Activated CD4-positive, alpha-beta T cell treated with anti-CD3 and anti-CD28 coated beads for 36 hours (primary cell): ENCODE measurements at regions of chr7 and their contacts with region 1.

Region 1: GRCh38 chr7:139645572-139646523 is 122.4 kb downstream of the CLEC2L start:
- DNase-seq: peak; percentile 92
- ATAC-seq: peak; percentile 43
- H3K4me3 Mint-ChIP-seq: no peak overlapping the region
- H3K27ac Mint-ChIP-seq: peak overlapping the region; percentile 38
- H3K4me1 Mint-ChIP-seq: peaks cover 82% of the 10 kb centered on the region
- H3K27me3 Mint-ChIP-seq: no peaks in the 10 kb centered on the region

Region 2: DNA sequence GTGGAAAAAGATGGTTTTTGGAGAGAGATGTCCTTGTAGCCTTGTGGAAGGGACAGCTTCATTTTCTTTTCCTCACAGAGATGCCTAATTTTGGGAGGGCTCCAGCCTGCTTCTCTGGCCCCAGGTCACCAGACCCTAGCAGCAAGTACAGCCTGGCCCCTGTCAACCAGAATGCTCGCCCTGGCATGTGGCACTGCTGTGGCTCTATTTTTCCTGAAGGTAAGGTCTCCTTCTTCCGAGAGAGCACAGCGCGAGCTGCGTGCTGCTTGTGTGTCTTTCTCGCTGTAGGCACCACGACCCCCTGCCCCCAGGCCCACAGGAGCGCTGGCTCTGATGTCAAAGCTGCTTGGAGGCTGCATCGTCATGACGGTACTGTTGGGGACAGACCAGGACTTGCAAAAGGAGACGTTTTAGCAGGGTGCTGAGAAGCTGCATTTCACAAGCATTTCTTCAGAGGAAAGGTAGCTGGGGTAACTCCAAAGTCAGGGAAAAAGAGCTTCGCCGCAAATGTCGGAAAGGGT is 63.7 kb before region 1 on chr7:
- CTCF ChIA-PET with region 1: no interaction called
- POLR2A ChIA-PET with region 1: no interaction called
- intact Hi-C with region 1: no loop called
- DNase-seq: no peak
- ATAC-seq: no peak
- H3K4me3 Mint-ChIP-seq: no peak overlapping the region
- H3K27ac Mint-ChIP-seq: no peak overlapping the region
- H3K4me1 Mint-ChIP-seq: peaks cover 2% of the 10 kb centered on the region
- H3K27me3 Mint-ChIP-seq: no peaks in the 10 kb centered on the region

Region 3: GRCh38 chr7:139620676-139621344 is 25.0 kb before region 1 on chr7:
- CTCF ChIA-PET with region 1: interaction called, 36 read pairs
- POLR2A ChIA-PET with region 1: no interaction called
- intact Hi-C with region 1: no loop called
- DNase-seq: peak; percentile 82
- ATAC-seq: peak; percentile 89
- H3K4me3 Mint-ChIP-seq: no peak overlapping the region
- H3K27ac Mint-ChIP-seq: no peak overlapping the region
- H3K4me1 Mint-ChIP-seq: peaks cover 27% of the 10 kb centered on the region
- H3K27me3 Mint-ChIP-seq: no peaks in the 10 kb centered on the region

Region 4: GRCh38 chr7:139660317-139661042 is 14.6 kb after region 1 on chr7:
- CTCF ChIA-PET with region 1: interaction called, 94 read pairs
- POLR2A ChIA-PET with region 1: interaction called, 4 read pairs
- intact Hi-C with region 1: no loop called
- DNase-seq: no peak
- ATAC-seq: no peak
- H3K4me3 Mint-ChIP-seq: no peak overlapping the region
- H3K27ac Mint-ChIP-seq: no peak overlapping the region
- H3K4me1 Mint-ChIP-seq: peaks cover 38% of the 10 kb centered on the region
- H3K27me3 Mint-ChIP-seq: no peaks in the 10 kb centered on the region

Region 5: GRCh38 chr7:139680676-139681462 is 35.0 kb after region 1 on chr7:
- CTCF ChIA-PET with region 1: interaction called, 17 read pairs
- POLR2A ChIA-PET with region 1: interaction called, 5 read pairs
- intact Hi-C with region 1: loop called (anchors 2 kb)
- DNase-seq: peak; percentile 94
- ATAC-seq: peak; percentile 73
- H3K4me3 Mint-ChIP-seq: peak overlapping the region; percentile 68
- H3K27ac Mint-ChIP-seq: peak overlapping the region; percentile 98
- H3K4me1 Mint-ChIP-seq: peaks cover 53% of the 10 kb centered on the region
- H3K27me3 Mint-ChIP-seq: no peaks in the 10 kb centered on the region

Region 6: GRCh38 chr7:139777948-139778841 is 132.3 kb after region 1 on chr7 and contains the start of gene HIPK2:
- CTCF ChIA-PET with region 1: interaction called, 22 read pairs
- POLR2A ChIA-PET with region 1: no interaction called
- intact Hi-C with region 1: loop called (anchors 2 kb)
- DNase-seq: peak; percentile 82
- ATAC-seq: peak; percentile 37
- H3K4me3 Mint-ChIP-seq: peak within 1 kb of the TSS; percentile 83
- H3K27ac Mint-ChIP-seq: peak within 1 kb of the TSS; percentile 93
- H3K4me1 Mint-ChIP-seq: peaks cover 41% of the 10 kb centered on the region
- H3K27me3 Mint-ChIP-seq: peaks cover 11% of the 10 kb centered on the region
- total RNA-seq, gene HIPK2: 23.9 to 36.2 TPM

Region 7: GRCh38 chr7:140003913-140004382 is 358.1 kb after region 1 on chr7:
- CTCF ChIA-PET with region 1: interaction called, 80 read pairs
- POLR2A ChIA-PET with region 1: no interaction called
- intact Hi-C with region 1: loop called (anchors 1 kb)
- DNase-seq: peak; percentile 53
- ATAC-seq: peak; percentile 16
- H3K4me3 Mint-ChIP-seq: no peak overlapping the region
- H3K27ac Mint-ChIP-seq: no peak overlapping the region
- H3K4me1 Mint-ChIP-seq: no peaks in the 10 kb centered on the region
- H3K27me3 Mint-ChIP-seq: no peaks in the 10 kb centered on the region